Transverse colon (tissue), 4 donors: ENCODE measurements at regions of chr12 and their contacts with region 1.

Region 1: DNA sequence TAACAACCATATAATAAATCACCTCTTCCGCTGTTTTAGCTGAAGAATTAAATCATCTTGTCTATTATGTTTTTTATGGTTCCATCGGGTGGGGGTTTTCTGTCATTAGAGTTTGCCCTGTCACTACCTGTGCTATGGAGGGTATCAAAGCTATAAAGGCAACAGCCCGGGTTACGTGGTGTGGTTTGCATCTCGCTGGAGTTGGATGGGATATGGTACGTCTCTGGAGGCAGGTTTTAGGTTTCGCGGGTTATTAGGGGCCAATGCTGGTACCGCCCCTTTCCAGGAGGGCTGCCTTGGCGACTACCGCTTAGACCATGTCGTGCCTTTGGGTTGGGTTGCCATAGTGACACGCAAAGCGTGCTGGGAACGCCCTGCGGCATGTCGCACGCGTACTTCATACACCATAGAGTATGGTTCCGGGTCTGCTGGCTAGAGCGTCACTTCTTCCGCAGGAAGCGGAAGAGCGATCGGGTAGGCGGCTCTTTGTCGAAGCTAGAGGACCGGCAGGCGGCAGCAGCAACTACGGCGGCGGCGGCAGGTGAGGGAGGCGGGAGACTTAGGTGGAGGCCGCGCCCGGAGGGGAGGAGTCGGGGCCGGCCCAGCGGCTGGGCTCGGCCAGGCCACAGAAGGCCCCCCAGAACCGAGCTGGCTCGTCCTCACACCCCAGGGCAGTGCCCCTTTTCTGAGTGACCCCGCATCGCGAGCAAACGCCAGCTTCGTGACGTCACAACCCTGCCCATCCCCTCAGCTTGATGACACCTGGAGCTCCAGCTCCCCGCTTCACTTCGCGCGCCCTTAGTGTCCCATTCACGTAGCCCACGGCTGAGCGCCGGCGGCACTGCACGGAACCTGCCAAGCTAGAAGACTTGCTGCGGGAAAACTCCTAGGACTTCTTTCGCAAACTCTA is at the start of gene ZC3H10:
- DNase-seq: peak; percentile 99
- H3K4me3 ChIP-seq: peak within 1 kb of the TSS; percentile 54 to 89 (median 70)
- H3K27ac ChIP-seq: peak within 1 kb of the TSS; percentile 91 to 99 (median 96)
- H3K4me1 ChIP-seq: peaks cover 8 to 29% (median 20%) of the 10 kb centered on the region in 4 donors
- H3K27me3 ChIP-seq: no peaks in the 10 kb centered on the region
- CTCF ChIP-seq: peak in 4 of 5 experiments; percentile 41 to 83 (median 52)
- EP300 ChIP-seq: no peak
- POLR2A ChIP-seq: peak; percentile 90
- total RNA-seq, gene ZC3H10: 3.7 to 10.1 (median 4.5) TPM

Region 2: DNA sequence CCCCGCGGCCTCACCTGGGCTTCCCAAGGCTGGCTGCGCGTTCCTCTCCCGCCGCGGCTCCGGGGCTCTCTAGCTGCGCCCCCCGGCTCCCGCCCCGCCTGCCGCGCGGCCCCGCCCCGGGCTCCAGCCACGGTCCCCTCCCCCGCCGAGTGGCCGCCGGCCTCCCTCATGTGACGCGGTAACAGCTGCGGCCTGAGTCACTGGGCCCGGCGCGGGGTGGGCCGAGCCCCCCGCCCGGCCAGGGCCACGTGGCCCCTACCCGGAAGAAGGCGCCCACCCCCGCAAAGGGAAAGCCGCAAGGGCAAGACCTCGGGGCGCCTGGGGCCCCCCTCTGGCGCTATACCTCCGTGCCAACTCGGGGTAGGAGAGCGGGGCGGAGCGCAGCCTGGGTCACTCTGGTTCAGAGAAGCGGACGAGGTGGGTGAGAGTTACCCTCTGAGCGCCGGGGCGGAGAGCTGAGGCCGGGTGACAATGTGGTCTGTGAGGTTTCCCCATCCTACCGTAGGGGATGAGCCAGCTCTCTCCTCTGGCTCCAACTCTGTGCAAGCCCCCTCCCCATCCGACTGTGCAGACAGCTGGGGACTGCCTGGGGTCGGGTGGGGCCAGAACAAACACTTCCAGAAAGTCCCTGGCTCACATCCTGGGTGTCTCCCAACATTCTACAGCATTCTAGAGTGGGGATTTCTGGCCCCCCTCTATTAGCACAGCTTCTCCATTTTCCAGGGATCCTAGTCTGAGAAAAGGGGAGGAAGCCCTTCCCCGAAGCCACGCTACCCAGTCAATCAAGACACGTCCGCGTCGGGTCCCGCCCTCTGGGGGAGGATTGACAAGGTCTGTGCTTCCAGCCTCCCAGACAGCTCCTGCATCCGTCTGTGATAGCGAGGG is 388.9 kb before region 1 on chr12 and contains the start of gene CD63:
- in situ Hi-C with region 1: loop called in 1 of 4 experiments (anchors 10 kb)
- intact Hi-C with region 1: no loop called
- DNase-seq: peak; percentile 92
- H3K4me3 ChIP-seq: peak within 1 kb of the TSS; percentile 87 to 99 (median 92)
- H3K27ac ChIP-seq: peak within 1 kb of the TSS; percentile 96 to 99 (median 98)
- H3K4me1 ChIP-seq: peaks cover 23 to 57% (median 39%) of the 10 kb centered on the region in 4 donors
- H3K27me3 ChIP-seq: no peaks in the 10 kb centered on the region
- CTCF ChIP-seq: peak in 1 of 5 experiments; percentile 23
- EP300 ChIP-seq: peak; percentile 56
- POLR2A ChIP-seq: peak; percentile 81
- total RNA-seq, gene CD63: 427 to 723 (median 581) TPM

Region 3: DNA sequence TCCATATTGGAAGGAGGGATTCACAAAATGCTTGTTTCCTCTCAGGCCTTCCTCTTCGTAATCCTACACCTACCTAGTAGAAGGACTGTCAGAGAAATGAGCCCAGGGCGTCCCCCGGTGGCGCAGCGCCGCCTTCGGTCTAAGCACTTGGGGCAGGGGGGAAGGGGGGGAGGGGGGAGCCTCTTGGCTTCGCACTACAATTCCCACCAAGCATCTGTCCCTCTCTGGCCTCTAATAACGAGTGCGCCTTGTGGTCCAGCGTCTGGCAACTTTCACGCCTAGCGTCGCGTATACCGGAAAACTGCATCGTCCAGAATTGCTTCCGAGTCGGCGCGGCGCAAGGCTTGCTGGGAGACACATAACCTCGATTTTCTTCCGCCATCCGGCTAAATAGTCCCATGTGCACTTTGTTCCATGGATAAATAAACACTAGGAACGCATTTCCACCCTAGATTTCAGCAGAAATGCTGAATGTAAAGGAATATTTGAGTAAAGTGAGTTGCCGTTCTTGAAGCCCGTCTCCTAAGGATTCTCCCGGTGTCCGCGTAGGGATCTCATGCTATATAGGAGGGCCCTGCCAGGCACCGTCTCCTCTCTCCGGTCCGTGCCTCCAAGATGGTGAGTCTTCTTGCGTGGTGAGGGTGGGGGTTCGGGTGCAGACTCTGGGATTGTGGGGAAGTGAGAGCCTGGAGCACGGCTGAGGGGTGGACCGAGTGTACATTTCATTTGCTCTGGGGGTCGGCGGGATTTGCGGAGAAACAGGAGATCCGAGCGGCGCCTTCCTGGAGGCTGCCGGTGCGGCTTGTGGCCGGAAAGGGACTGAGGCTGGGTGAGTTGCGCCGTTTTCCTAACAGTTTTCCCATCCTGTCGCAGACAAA is 76.2 kb before region 1 on chr12 and contains the start of gene RPS26:
- in situ Hi-C with region 1: loop called in 1 of 4 experiments (anchors 10 kb)
- intact Hi-C with region 1: no loop called
- DNase-seq: peak; percentile 96
- H3K4me3 ChIP-seq: peak within 1 kb of the TSS; percentile 51 to 80 (median 68)
- H3K27ac ChIP-seq: peak within 1 kb of the TSS; percentile 90 to 93 (median 90)
- H3K4me1 ChIP-seq: peaks cover 11 to 24% (median 20%) of the 10 kb centered on the region in 4 donors
- H3K27me3 ChIP-seq: no peaks in the 10 kb centered on the region
- CTCF ChIP-seq: peak in 4 of 5 experiments; percentile 7 to 62 (median 36)
- EP300 ChIP-seq: no peak
- POLR2A ChIP-seq: peak; percentile 99
- total RNA-seq, gene RPS26: 283 to 2,670 (median 937) TPM

Region 4: DNA sequence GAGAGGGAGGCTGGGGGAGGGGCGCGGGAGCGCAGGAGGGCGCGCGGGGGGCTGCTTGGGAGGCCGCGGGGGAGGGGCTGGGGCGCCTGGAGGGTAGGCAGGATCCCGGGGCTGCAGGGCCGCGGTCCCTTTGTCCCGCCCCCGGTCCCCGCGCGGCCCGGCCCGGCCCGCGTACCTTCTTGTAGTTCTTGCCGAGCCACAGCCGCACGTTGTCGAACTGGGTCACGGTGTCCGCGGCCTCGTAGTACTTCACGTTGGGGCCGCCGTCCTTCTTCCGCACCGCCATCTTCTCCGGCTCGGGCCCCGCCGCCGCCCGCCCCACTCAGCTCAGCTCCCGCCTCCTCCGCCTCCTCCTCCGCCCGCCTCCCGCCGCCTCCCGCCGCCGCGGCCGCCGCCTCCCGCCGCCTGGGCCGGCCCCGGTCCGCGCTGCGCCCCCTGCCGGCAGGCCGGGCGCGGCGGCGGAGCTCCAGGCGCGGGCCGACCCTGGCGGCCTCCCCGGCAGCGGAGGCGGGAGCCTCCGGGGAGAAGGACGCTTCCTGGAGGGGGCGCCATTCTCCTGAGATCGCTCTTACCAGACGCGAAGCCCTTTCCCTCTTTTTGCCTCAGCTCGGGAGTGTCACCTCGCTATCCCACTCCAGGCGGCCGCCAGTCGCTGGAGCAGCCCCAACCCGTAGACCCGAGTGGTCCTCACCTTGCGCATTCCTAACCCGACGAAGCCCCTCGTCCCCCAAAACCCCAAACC is 71.3 kb after region 1 on chr12 and contains the start of gene SMARCC2:
- in situ Hi-C with region 1: loop called in 1 of 4 experiments (anchors 10 kb)
- intact Hi-C with region 1: loop called (anchors 2 kb)
- DNase-seq: peak; percentile 94
- H3K4me3 ChIP-seq: peak within 1 kb of the TSS; percentile 87 to 99 (median 98)
- H3K27ac ChIP-seq: peak within 1 kb of the TSS; percentile 95 to 100 (median 99)
- H3K4me1 ChIP-seq: peaks cover 12 to 28% (median 22%) of the 10 kb centered on the region in 4 donors
- H3K27me3 ChIP-seq: no peaks in the 10 kb centered on the region
- CTCF ChIP-seq: peak; percentile 65 to 82 (median 74)
- EP300 ChIP-seq: no peak
- POLR2A ChIP-seq: peak; percentile 56
- total RNA-seq, gene SMARCC2: 63.8 to 231 (median 135) TPM

Region 5: DNA sequence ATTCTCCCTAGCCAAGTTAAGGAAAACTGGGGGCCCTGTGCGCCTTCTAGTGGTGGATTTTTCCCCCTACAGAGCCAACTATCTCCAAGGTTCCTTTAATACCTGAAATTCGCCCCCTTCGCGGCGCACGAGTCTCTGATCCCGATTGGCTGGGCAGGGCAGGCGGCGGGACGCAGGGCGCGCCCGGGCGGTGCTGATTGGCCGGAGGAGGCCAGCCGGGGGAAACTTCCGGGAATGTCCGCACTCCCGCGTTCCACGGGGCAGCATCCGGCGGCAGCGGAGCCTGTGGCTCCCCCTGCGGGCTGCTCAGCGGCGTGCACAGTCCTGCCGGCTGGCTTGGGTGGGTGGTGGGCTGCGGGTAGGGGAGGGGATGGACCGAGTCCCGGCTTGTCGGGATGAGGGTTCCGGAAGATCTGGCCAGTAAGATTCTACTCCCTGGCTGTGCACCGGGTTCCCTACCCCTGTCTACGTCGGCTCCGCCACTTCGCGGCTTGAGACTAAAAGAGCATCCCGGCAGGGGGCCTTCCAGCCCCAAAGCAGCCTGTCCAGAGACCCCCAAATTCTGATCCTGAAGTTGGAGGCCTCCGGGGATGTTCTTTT is 106.2 kb after region 1 on chr12 and contains the start of gene NABP2:
- in situ Hi-C with region 1: no loop called
- intact Hi-C with region 1: loop called (anchors 2 kb)
- DNase-seq: peak; percentile 99
- H3K4me3 ChIP-seq: peak within 1 kb of the TSS; percentile 31 to 80 (median 52)
- H3K27ac ChIP-seq: peak within 1 kb of the TSS; percentile 96 to 99 (median 98)
- H3K4me1 ChIP-seq: peaks cover 28 to 47% (median 39%) of the 10 kb centered on the region in 4 donors
- H3K27me3 ChIP-seq: no peaks in the 10 kb centered on the region
- CTCF ChIP-seq: peak; percentile 80 to 98 (median 89)
- EP300 ChIP-seq: no peak
- POLR2A ChIP-seq: peak; percentile 56
- total RNA-seq, gene NABP2: 4.9 to 26.8 (median 15.5) TPM

Region 6: GRCh38 chr12:56257491-56258056 is 139.5 kb after region 1 on chr12:
- in situ Hi-C with region 1: no loop called
- intact Hi-C with region 1: no loop called
- DNase-seq: no peak
- H3K4me3 ChIP-seq: peak overlapping the region; percentile 66 to 83 (median 72)
- H3K27ac ChIP-seq: peak overlapping the region; percentile 87 to 93 (median 90)
- H3K4me1 ChIP-seq: peaks cover 16 to 23% (median 22%) of the 10 kb centered on the region in 4 donors
- H3K27me3 ChIP-seq: no peaks in the 10 kb centered on the region
- CTCF ChIP-seq: no peak
- EP300 ChIP-seq: no peak
- POLR2A ChIP-seq: no peak